A673 (cell line): ENCODE measurements at regions of chr10 and their contacts with region 1.

Region 1: DNA sequence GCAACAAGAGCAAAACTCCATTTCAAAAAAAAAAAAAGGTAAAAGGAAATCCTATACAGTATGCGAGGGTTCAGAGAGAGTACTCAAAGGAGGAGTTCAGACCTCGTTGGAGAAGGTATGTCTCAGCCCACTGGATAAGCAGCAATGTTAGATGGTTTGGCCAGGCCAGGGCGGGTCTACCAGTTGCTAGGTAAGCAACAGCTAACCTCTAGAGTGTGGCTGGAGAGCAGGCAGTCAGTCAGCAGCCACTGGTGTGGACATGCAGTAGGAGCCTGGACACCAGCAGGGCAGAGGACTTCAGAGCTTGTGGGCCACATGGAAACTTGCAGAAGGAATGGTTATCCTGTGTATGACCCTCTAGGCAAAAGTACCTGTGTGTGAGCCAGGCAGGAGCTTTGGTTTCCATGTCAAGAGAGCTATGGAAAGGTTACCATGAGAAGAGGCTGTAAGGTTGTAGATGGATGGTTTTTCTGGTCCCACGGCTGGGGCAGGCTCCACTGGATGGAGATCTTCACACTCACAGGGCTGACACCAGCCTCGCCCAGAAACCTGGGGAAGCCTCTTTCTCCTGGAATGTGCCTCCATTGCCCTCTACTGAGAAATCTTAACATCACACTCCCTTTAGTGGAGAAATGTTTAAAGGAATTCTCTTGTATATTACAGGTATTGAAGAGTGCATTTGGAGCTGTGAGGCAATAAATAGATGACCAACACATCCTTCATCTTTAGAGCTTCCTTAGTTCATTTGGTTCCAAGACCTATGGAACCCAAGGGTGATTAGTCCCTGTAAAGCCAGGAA is 63.6 kb downstream of the CCDC186 start:
- DNase-seq: peak; percentile 69
- H3K4me3 ChIP-seq: no peak overlapping the region
- H3K27ac ChIP-seq: no peak overlapping the region
- H3K4me1 ChIP-seq: peaks cover 4% of the 10 kb centered on the region
- H3K27me3 ChIP-seq: no peaks in the 10 kb centered on the region
- CTCF ChIP-seq: peak; percentile 64

Region 2: GRCh38 chr10:114195079-114195478 is 84.7 kb after region 1 on chr10:
- CTCF ChIA-PET with region 1: no interaction called
- POLR2A ChIA-PET with region 1: interaction called, 12 read pairs
- intact Hi-C with region 1: no loop called
- DNase-seq: no peak
- H3K4me3 ChIP-seq: no peak overlapping the region
- H3K27ac ChIP-seq: no peak overlapping the region
- H3K4me1 ChIP-seq: no peaks in the 10 kb centered on the region
- H3K27me3 ChIP-seq: peaks cover 19% of the 10 kb centered on the region
- CTCF ChIP-seq: no peak

Region 3: DNA sequence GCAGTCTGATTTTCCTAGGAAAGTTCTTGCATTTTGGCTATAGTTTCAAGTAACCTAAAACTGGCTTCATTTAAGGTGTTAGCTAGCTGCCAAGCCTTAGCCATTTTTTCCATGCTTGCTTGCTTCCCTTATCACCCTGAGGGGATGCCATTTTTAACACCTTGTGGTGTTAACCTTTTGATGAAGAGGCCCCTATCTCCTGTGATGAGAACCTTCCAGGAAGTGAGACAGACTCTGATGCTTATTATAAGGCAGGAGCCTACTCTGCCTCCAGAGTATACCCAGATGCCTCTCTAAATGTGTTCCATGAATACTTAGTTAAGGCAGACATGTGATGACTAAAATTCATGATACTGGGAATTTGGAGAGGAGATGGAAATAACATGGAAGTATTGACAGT is 123.8 kb after region 1 on chr10:
- CTCF ChIA-PET with region 1: no interaction called
- POLR2A ChIA-PET with region 1: no interaction called
- intact Hi-C with region 1: no loop called
- DNase-seq: no peak
- H3K4me3 ChIP-seq: no peak overlapping the region
- H3K27ac ChIP-seq: no peak overlapping the region
- H3K4me1 ChIP-seq: peaks cover 27% of the 10 kb centered on the region
- H3K27me3 ChIP-seq: peaks cover 60% of the 10 kb centered on the region
- CTCF ChIP-seq: no peak